Cardiac septum (tissue), 1 donor: ENCODE measurements at regions of chr5 and their contacts with region 1.

Region 1: GRCh38 chr5:131165119-131165727 is at the start of gene HINT1:
- DNase-seq: peak; percentile 96
- total RNA-seq, gene HINT1: 102 TPM

Region 2: GRCh38 chr5:131142970-131143617 is 22.1 kb before region 1 on chr5:
- intact Hi-C with region 1: no loop called
- DNase-seq: no peak

Region 3: DNA sequence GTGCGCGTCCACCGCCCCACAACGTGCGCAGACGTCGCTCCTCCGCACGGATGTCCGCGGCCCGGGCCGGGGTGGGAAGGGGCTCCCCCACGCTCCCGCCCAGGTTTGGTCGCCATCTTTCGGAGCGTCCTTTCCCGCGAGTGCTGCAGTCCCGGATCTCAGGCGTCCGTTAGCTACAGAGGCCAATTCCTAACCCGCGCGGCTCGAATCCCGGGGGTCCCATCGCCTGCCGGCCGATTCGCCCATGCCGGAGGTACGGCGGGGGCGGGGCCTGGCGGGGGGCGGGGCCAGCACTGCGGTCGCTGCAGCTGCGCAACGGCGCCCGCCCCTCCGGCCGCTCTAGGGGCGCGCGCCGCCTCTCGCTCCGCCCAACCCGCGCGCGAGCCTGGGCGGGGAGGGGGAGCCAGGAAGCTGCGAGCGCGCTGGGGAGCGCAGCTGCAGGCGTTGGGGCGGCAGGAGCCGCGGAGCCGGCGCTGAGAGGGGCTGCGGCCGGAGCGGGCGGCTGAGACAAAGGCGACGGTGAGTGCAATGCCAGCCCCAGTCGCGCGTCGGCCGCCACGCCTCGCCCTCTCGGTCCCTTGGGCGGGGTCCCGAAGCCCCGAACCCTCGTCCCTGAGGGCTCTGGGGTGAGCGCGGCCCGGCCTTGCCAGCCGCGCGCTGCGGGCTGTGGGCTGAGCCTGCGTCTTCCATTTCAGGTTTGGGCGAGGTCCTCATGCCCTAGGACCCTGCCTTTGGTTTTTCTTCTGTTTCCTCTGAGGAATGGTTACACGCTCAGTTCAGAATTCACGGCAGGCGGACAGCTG is 98.6 kb after region 1 on chr5 and contains the start of gene CDC42SE2:
- intact Hi-C with region 1: loop called (anchors 2 kb)
- DNase-seq: peak; percentile 94
- total RNA-seq, gene CDC42SE2: 8.6 TPM

Region 4: GRCh38 chr5:131382407-131383395 is 217.5 kb after region 1 on chr5:
- intact Hi-C with region 1: loop called (anchors 10 kb)
- DNase-seq: no peak